Endothelial cell of umbilical vein (primary cell): ENCODE measurements at regions of chr2 and their contacts with region 1.

Region 1: DNA sequence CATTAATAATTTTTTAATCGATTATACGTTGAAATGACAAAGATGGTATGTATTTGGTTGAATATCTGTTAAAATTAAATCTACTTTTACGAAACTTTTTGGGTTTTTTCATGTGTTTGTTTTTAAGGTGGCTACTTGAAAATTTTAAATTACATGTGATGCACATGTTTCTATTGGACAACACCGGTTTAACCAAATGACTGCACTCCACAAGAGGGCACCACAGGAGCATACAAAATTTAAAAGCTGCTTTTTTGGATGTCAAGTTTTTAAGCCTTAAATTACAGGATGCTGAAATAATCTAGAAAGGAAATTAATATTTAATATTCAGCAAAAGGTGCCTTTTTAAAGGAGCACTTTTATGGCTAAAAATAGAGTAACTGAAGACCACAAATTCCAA is 98.7 kb downstream of the ACVR1 start:
- DNase-seq: peak; percentile 74
- H3K4me3 ChIP-seq: no peak overlapping the region
- H3K27ac ChIP-seq: no peak overlapping the region
- H3K4me1 ChIP-seq: no peaks in the 10 kb centered on the region
- H3K27me3 ChIP-seq: no peaks in the 10 kb centered on the region
- CTCF ChIP-seq: peak; percentile 39 to 50
- POLR2A ChIP-seq: no peak

Region 2: DNA sequence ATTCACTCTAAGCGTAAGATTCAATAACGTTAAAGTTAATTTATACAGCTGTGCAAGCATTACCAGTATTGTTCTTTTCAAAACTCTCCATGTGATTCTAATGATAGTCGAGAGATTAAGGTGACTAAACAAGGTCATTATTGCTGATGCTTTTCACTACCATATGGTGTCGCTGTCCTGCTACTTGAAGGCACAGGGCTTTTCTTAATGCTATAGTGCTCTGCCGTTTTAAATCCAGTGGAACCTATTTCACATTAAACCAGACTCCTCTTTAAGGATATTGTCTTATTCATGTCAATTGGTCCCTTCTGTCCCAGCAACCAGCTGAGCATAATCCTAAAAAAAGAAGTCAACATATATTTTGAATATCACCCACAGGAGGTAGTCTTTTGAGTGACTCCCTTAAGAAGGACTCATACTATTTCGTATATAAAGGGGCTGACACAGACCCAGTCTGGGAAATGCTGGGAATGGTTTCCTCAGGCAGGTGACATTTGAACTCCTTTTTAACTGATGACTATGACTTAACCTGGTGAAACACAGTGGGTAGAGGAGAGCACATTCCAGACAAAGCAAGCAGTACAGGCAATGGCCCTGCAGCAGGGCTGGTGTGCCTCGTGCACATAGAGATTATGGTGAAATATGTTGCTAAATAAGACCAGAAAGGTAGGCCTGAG is 279.7 kb before region 1 on chr2:
- CTCF ChIA-PET with region 1: interaction called, 3 read pairs
- POLR2A ChIA-PET with region 1: no interaction called
- dilution Hi-C with region 1: no loop called
- intact Hi-C with region 1: loop called (anchors 1 kb)
- DNase-seq: peak; percentile 36
- H3K4me3 ChIP-seq: no peak overlapping the region
- H3K27ac ChIP-seq: no peak overlapping the region
- H3K4me1 ChIP-seq: no peaks in the 10 kb centered on the region
- H3K27me3 ChIP-seq: peaks cover 0 to 3% of the 10 kb centered on the region in 2 experiments
- CTCF ChIP-seq: peak; percentile 53 to 63
- POLR2A ChIP-seq: no peak